Calu3 (cell line): ENCODE measurements at regions of chr11 and their contacts with region 1.

Region 1: DNA sequence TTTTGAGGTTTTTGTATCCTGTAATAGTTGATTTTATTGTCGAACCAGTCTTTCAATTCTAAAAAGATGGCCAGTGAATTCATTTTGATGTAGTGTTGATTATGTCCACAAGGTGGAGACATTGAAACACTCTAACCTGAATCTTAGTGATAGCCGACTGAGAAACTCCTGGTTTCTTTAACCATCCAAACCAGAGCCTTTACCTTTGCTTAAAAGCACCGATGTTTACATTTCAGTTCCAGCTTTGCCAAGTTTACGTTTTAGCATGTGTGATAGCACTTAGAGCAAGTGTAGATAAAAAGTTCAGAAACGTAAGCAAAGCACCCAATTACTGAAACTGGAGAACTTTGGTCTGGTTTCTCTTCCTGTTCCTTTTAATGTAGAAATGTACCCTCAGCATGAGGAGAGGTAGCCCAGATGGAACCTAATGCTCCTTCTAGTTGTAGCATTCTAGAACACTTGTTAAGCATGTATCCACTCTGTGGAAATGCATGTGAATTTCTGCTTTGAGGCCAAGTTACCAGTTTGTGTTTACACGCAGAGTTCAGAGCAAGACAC is 208.6 kb downstream of the DBX1 start:
- DNase-seq: peak; percentile 44
- H3K4me3 Mint-ChIP-seq: no peak overlapping the region
- H3K27ac Mint-ChIP-seq: no peak overlapping the region
- H3K4me1 Mint-ChIP-seq: peaks cover 38% of the 10 kb centered on the region
- H3K27me3 Mint-ChIP-seq: no peaks in the 10 kb centered on the region
- CTCF ChIP-seq: peak; percentile 24

Region 2: GRCh38 chr11:19892387-19892786 is 59.2 kb before region 1 on chr11:
- CTCF ChIA-PET with region 1: no interaction called
- intact Hi-C with region 1: no loop called
- DNase-seq: no peak
- H3K4me3 Mint-ChIP-seq: no peak overlapping the region
- H3K27ac Mint-ChIP-seq: no peak overlapping the region
- H3K4me1 Mint-ChIP-seq: peaks cover 11% of the 10 kb centered on the region
- H3K27me3 Mint-ChIP-seq: no peaks in the 10 kb centered on the region
- CTCF ChIP-seq: no peak

Region 3: DNA sequence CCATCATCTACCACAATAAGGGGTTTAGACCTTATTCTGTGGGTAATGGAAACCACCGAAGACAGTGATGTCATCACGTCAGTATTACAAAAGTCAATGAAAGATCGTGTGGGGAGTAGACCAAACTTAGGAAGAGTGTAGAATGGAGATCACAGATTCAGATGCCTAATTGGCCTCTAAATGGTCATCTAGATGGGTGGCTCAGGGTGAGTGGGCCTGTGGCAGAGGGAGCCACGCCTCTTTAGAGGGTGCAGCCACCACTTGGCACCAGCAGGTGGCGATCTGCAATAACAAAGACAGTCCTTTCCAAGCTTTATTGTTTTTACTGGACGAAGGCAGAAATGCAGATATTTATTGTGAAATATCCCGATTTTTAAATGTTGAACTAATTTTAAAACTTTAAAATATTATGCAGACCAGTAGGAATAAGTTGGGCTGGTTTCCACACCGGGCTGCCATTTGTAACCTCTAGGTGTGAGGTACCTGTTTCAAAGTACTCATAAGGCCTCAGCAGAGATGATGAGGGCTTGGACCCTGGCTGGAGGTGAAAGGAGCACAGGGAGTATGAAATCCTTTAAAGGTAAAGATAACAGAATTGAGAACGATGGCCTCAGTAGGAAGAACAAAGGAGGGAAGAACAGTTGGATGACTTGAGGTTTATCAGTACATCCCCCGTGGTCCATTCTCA is 13.3 kb before region 1 on chr11:
- CTCF ChIA-PET with region 1: interaction called, 25 read pairs
- intact Hi-C with region 1: no loop called
- DNase-seq: peak; percentile 74
- H3K4me3 Mint-ChIP-seq: no peak overlapping the region
- H3K27ac Mint-ChIP-seq: peak overlapping the region; percentile 16
- H3K4me1 Mint-ChIP-seq: peaks cover 29% of the 10 kb centered on the region
- H3K27me3 Mint-ChIP-seq: no peaks in the 10 kb centered on the region
- CTCF ChIP-seq: peak; percentile 78

Region 4: DNA sequence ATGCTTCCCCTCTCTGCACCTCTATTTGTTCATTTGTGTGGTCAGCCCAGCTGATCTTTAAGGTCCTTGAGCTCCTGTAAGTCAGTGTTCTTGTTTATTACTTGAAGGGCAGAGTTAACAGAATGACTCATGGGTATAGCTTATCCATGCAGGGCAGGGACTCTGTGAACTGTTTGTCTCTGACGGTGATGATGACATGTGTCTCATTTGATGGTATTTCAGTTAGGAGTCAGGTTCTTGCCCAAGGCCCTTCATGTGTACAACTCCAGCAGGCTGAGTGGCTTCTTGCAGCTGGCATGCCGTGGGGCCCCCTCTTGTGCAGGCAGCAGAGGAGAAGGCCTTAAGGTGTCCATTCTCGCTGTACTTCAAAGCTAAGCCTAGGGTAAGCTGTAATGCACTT is 43.5 kb after region 1 on chr11:
- CTCF ChIA-PET with region 1: interaction called, 10 read pairs
- intact Hi-C with region 1: no loop called
- DNase-seq: peak; percentile 35
- H3K4me3 Mint-ChIP-seq: no peak overlapping the region
- H3K27ac Mint-ChIP-seq: peak overlapping the region; percentile 60
- H3K4me1 Mint-ChIP-seq: peaks cover 31% of the 10 kb centered on the region
- H3K27me3 Mint-ChIP-seq: no peaks in the 10 kb centered on the region
- CTCF ChIP-seq: no peak

Region 5: GRCh38 chr11:20013346-20014066 is 61.9 kb after region 1 on chr11:
- CTCF ChIA-PET with region 1: interaction called, 3 read pairs
- intact Hi-C with region 1: loop called (anchors 2 kb)
- DNase-seq: peak; percentile 28
- H3K4me3 Mint-ChIP-seq: peak overlapping the region; percentile 10
- H3K27ac Mint-ChIP-seq: peak overlapping the region; percentile 46
- H3K4me1 Mint-ChIP-seq: peaks cover 44% of the 10 kb centered on the region
- H3K27me3 Mint-ChIP-seq: no peaks in the 10 kb centered on the region
- CTCF ChIP-seq: no peak

Region 6: GRCh38 chr11:20110908-20111669 is 159.5 kb after region 1 on chr11:
- CTCF ChIA-PET with region 1: interaction called, 5 read pairs
- intact Hi-C with region 1: loop called (anchors 1 kb)
- DNase-seq: peak; percentile 78
- H3K4me3 Mint-ChIP-seq: no peak overlapping the region
- H3K27ac Mint-ChIP-seq: peak overlapping the region; percentile 81
- H3K4me1 Mint-ChIP-seq: peaks cover 29% of the 10 kb centered on the region
- H3K27me3 Mint-ChIP-seq: no peaks in the 10 kb centered on the region
- CTCF ChIP-seq: peak; percentile 77

Region 7: GRCh38 chr11:20544603-20545237 is 593.1 kb after region 1 on chr11:
- CTCF ChIA-PET with region 1: no interaction called
- intact Hi-C with region 1: no loop called
- DNase-seq: no peak
- H3K4me3 Mint-ChIP-seq: no peak overlapping the region
- H3K27ac Mint-ChIP-seq: no peak overlapping the region
- H3K4me1 Mint-ChIP-seq: no peaks in the 10 kb centered on the region
- H3K27me3 Mint-ChIP-seq: peaks cover 21% of the 10 kb centered on the region
- CTCF ChIP-seq: no peak